ENCODE measurements at regions of chr9 and their contacts with region 1.

Region 1: GRCh38 chr9:546797-547223 is 294.7 kb upstream of the DMRT1 start:
- DNase-seq: no peak
- H3K4me3 ChIP-seq: peak overlapping the region in 1 of 4 donors; percentile 9
- H3K27ac ChIP-seq: peak overlapping the region; percentile 36 to 57 (median 40)
- H3K4me1 ChIP-seq: peaks cover 0 to 21% (median 14%) of the 10 kb centered on the region in 4 donors
- H3K27me3 ChIP-seq: no peaks in the 10 kb centered on the region
- CTCF ChIP-seq: peak in 3 of 4 experiments; percentile 15 to 27 (median 23)
- EP300 ChIP-seq: no peak
- POLR2A ChIP-seq: no peak

Region 2: GRCh38 chr9:469672-470551 is 76.9 kb before region 1 on chr9:
- intact Hi-C with region 1: loop called (anchors 10 kb)
- DNase-seq: peak; percentile 92
- H3K4me3 ChIP-seq: peak overlapping the region; percentile 46 to 67 (median 64)
- H3K27ac ChIP-seq: peak overlapping the region; percentile 75 to 86 (median 78)
- H3K4me1 ChIP-seq: peaks cover 0 to 23% (median 14%) of the 10 kb centered on the region in 4 donors
- H3K27me3 ChIP-seq: no peaks in the 10 kb centered on the region
- CTCF ChIP-seq: no peak
- EP300 ChIP-seq: no peak
- POLR2A ChIP-seq: peak in 1 of 2 donors; percentile 27

Region 3: DNA sequence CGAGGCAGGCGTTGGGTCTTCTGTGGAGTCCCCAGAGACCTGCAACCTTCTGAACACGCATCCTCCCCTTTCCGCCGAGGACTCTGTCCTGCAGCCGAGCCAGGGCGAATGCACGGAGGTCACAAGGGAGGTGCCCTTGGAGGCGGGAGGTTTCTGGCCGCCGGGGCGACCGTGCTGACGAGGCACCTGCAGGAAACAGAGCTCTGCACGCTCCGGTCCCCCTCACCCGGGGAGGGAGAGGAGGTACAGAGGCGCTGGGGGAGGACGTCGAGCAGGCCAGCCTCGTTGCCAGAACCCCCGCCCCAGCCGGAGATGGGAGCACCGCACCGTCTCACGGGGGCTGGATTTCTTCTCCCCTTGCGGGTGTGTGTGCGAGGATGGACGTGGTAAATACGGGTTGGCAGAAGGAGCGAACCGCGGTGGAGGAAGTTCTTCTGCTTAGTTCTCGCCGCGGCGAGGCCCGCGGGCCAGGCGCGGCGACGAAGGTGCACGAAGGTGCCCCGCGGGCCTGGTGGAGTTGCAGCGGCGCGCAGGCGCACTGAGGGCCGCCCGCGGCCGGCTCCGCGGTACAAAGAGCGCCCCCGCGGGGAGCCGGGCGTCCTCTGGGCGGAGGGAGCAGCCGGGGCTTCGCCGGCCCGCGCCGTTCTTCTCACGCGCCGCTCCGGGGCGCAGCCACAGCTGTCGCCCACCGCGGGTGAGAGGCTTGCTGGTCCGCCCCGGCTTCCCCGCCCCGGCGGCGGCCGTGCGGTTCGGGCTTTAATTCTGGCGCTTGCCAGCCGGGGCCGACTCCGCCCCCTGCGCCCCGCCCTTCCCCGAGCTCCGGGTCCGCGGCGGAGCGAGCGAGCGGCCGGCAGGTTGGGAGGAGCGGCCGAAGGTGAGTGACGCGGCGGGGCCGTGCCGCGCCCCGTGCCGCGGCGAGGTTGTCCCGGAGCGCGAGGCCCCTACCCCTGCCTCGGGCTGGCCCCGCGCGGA is 42.6 kb before region 1 on chr9:
- intact Hi-C with region 1: loop called (anchors 5 kb)
- DNase-seq: peak; percentile 81
- H3K4me3 ChIP-seq: peak within 1 kb of the TSS; percentile 62 to 82 (median 70)
- H3K27ac ChIP-seq: peak within 1 kb of the TSS; percentile 80 to 85 (median 83)
- H3K4me1 ChIP-seq: peaks cover 0 to 23% (median 14%) of the 10 kb centered on the region in 4 donors
- H3K27me3 ChIP-seq: no peaks in the 10 kb centered on the region
- CTCF ChIP-seq: no peak
- EP300 ChIP-seq: no peak
- POLR2A ChIP-seq: no peak

Region 4: DNA sequence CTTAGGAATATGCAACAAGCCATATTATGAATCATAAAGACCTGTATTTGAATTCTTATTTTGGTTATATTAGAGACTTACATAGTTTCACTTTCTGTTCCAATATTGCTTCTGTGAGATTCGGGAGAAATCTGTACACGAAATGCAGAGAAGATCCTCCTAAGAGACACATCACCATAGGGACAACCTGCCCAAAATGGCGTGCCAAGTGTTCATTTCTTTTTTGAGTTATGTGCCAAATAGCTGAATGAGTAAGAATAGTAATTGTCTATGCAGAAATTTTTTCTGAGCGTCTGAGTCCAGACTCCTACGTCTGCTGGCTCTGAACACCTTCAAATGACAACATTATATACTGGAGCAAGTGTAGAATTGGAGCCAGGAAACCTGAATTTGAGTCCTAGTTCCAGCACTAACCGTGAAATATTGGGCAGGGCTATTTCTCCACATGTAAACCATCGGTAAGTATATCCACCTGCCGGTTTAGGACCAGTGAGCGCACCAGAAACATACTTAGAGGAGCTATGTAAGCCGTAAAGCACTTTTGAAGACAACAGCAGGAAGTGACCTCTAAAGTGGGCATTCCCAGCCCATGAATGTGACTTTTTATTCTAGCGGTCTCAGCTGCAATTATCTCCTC is 130.8 kb after region 1 on chr9:
- intact Hi-C with region 1: no loop called
- DNase-seq: no peak
- H3K4me3 ChIP-seq: peak overlapping the region; percentile 31 to 50 (median 45)
- H3K27ac ChIP-seq: peak overlapping the region; percentile 74 to 83 (median 76)
- H3K4me1 ChIP-seq: peaks cover 0 to 31% (median 22%) of the 10 kb centered on the region in 4 donors
- H3K27me3 ChIP-seq: no peaks in the 10 kb centered on the region
- CTCF ChIP-seq: no peak
- EP300 ChIP-seq: no peak
- POLR2A ChIP-seq: peak in 1 of 2 donors; percentile 31